PC-9 (cell line): ENCODE measurements at regions of chr12 and their contacts with region 1.

Region 1: DNA sequence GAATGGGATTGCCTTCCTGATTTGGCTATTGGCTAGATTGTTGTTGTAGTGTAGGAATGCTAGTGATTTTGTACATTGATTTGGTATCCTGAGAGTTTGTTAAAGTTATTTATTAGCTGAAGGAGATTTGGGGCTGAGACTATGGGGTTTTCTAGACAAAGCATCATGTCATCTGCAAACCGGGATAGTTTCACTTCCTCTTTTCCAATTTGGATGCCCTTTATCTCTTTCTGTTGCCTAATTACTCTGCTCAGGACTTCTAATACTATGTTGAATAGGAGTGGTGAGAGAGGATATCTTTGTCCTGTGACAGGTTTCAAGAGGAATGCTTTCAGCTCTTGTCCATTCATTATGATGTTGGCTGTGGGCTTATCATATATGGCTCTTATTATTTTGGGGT is 265.7 kb upstream of the MGAT4C start:
- DNase-seq: no peak
- H3K4me3 ChIP-seq: no peak overlapping the region
- H3K27ac ChIP-seq: no peak overlapping the region
- H3K4me1 ChIP-seq: no peaks in the 10 kb centered on the region
- H3K27me3 ChIP-seq: no peaks in the 10 kb centered on the region
- CTCF ChIP-seq: no peak

Region 2: DNA sequence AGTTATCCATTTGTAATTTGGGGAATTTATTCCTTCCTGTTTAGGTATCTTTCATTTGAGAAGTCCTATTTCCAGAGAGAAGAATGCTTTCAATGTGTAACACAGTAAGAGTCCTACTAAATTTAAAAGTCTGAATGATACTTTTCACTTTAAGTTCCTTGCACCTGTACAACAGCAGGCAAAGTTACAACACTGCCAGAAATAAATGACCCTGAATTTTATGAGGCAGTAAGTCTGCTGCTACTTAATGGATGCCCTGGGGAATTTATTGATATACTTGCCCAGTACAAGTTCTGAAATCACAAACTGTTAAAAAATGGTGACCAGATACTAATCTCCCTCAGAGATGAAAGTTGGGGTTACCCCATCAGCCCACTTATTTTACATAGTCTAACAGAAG is 594.7 kb before region 1 on chr12:
- CTCF ChIA-PET with region 1: no interaction called
- POLR2A ChIA-PET with region 1: interaction called, 10 read pairs
- intact Hi-C with region 1: no loop called
- DNase-seq: no peak
- H3K4me3 ChIP-seq: no peak overlapping the region
- H3K27ac ChIP-seq: no peak overlapping the region
- H3K4me1 ChIP-seq: no peaks in the 10 kb centered on the region
- H3K27me3 ChIP-seq: no peaks in the 10 kb centered on the region
- CTCF ChIP-seq: no peak